ENCODE measurements at regions of chr2 and their contacts with region 1.

Region 1: GRCh38 chr2:17672583-17673317 is 80.9 kb downstream of the SMC6 start:
- DNase-seq: peak; percentile 47
- H3K4me3 Mint-ChIP-seq: no peak overlapping the region
- H3K27ac Mint-ChIP-seq: no peak overlapping the region
- H3K4me1 Mint-ChIP-seq: peaks cover 11% of the 10 kb centered on the region
- H3K27me3 Mint-ChIP-seq: no peaks in the 10 kb centered on the region
- CTCF ChIP-seq: no peak

Region 2: GRCh38 chr2:16767789-16768476 is 904.8 kb before region 1 on chr2:
- CTCF ChIA-PET with region 1: interaction called, 37 read pairs
- POLR2A ChIA-PET with region 1: no interaction called
- intact Hi-C with region 1: loop called (anchors 1 kb)
- DNase-seq: no peak
- H3K4me3 Mint-ChIP-seq: no peak overlapping the region
- H3K27ac Mint-ChIP-seq: no peak overlapping the region
- H3K4me1 Mint-ChIP-seq: peaks cover 9% of the 10 kb centered on the region
- H3K27me3 Mint-ChIP-seq: peaks cover 21% of the 10 kb centered on the region
- CTCF ChIP-seq: no peak

Region 3: GRCh38 chr2:17000184-17000482 is 672.6 kb before region 1 on chr2:
- CTCF ChIA-PET with region 1: no interaction called
- POLR2A ChIA-PET with region 1: no interaction called
- intact Hi-C with region 1: no loop called
- DNase-seq: no peak
- H3K4me3 Mint-ChIP-seq: no peak overlapping the region
- H3K27ac Mint-ChIP-seq: no peak overlapping the region
- H3K4me1 Mint-ChIP-seq: no peaks in the 10 kb centered on the region
- H3K27me3 Mint-ChIP-seq: no peaks in the 10 kb centered on the region
- CTCF ChIP-seq: no peak

Region 4: DNA sequence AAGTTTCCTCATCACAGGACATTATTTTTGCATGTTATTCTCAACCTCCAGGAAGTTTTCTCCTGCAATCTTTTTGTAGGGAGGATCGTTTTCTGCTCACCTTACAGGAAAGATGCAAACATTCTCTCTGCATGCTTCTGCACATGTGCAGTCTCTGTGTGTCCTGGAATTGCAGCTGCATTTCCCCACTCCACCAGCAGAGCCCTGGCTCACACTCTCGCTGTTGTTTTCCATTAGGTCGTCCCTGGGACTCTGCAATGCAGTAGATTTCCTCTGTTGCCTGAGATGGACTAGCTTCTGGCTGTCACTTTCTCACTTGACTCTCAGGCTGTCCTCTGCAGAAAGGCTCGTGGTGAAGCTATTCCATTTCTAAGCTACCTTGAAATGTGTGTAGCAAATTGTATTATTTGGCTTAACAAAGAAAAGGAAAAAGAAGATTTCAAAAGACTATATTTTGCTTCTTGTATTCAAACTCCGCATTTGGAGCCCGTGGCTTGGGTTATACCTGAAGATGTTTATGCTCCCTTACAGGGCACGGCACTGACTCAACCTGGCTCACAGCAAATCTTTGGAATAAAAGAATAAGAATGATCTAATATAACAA is 501.2 kb before region 1 on chr2:
- CTCF ChIA-PET with region 1: no interaction called
- POLR2A ChIA-PET with region 1: no interaction called
- intact Hi-C with region 1: loop called (anchors 10 kb)
- DNase-seq: peak; percentile 63
- H3K4me3 Mint-ChIP-seq: no peak overlapping the region
- H3K27ac Mint-ChIP-seq: no peak overlapping the region
- H3K4me1 Mint-ChIP-seq: no peaks in the 10 kb centered on the region
- H3K27me3 Mint-ChIP-seq: no peaks in the 10 kb centered on the region
- CTCF ChIP-seq: peak; percentile 39

Region 5: DNA sequence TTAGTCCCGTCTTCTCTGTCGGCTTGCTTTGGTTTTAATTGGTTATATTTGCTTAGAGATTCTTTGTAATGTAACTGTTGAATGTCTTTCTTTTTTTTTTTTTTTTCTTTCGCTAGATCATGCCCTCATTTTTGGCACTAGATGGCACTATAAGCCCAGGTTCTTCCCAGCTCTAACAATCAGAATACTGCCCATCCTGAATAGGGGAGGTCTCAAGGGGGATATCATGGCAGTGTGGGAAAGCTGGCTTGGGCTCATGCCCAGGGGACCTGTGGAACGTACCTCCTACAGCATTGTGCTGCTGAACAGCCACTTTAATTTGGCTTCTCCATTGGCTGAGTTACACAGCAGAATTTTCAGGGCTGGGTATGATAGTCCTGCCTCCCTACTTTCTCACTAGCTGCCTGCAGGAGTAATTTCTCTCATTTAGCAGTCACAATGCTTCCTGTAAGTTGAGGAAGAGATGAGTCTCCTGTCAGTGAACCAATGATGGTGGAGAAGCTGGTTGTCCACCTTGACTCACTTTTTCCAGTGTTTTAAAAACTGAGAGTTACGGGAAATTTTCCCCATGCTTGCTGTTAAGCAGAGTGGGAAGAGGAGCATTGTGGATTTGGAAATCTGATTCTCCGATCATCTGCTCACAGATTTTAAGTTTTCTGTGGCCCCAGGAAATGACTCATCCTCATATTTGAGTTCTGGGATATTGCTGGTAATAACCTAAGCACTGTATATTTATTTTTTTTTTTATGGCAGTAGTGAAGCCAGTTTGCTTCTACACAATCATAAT is 201.7 kb before region 1 on chr2:
- CTCF ChIA-PET with region 1: interaction called, 32 read pairs
- POLR2A ChIA-PET with region 1: no interaction called
- intact Hi-C with region 1: loop called (anchors 1 kb)
- DNase-seq: peak; percentile 76
- H3K4me3 Mint-ChIP-seq: no peak overlapping the region
- H3K27ac Mint-ChIP-seq: no peak overlapping the region
- H3K4me1 Mint-ChIP-seq: peaks cover 8% of the 10 kb centered on the region
- H3K27me3 Mint-ChIP-seq: no peaks in the 10 kb centered on the region
- CTCF ChIP-seq: peak; percentile 53

Region 6: DNA sequence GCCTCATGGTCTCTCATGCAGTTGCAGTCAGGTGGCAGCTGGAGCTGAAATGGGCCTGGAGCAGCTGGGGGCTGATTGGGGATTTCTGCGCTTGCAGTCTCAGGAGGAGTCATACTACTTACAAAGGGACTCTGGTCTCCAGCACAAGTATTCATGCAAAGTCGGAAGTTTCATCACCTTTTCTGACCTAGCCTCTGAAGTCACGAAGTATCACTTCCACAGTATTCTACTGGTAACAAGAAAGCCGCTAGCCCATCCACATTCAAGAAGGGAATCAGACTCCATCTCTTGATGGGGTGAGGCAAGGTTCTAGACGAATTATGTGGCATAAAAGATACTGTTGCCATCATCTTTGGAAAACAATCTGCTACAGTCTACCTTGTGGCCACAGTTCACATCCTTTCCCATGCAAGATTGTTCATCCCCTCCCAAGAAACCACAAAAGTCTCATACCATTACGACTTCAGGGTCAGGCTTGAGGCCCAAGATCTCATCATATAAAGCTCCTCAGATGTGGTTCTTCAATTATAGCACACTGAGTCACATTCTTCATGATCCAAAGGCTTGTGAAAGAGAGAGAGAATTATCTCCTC is 14.4 kb before region 1 on chr2:
- CTCF ChIA-PET with region 1: interaction called, 32 read pairs
- POLR2A ChIA-PET with region 1: interaction called, 6 read pairs
- intact Hi-C with region 1: no loop called
- DNase-seq: no peak
- H3K4me3 Mint-ChIP-seq: no peak overlapping the region
- H3K27ac Mint-ChIP-seq: no peak overlapping the region
- H3K4me1 Mint-ChIP-seq: no peaks in the 10 kb centered on the region
- H3K27me3 Mint-ChIP-seq: no peaks in the 10 kb centered on the region
- CTCF ChIP-seq: no peak

Region 7: DNA sequence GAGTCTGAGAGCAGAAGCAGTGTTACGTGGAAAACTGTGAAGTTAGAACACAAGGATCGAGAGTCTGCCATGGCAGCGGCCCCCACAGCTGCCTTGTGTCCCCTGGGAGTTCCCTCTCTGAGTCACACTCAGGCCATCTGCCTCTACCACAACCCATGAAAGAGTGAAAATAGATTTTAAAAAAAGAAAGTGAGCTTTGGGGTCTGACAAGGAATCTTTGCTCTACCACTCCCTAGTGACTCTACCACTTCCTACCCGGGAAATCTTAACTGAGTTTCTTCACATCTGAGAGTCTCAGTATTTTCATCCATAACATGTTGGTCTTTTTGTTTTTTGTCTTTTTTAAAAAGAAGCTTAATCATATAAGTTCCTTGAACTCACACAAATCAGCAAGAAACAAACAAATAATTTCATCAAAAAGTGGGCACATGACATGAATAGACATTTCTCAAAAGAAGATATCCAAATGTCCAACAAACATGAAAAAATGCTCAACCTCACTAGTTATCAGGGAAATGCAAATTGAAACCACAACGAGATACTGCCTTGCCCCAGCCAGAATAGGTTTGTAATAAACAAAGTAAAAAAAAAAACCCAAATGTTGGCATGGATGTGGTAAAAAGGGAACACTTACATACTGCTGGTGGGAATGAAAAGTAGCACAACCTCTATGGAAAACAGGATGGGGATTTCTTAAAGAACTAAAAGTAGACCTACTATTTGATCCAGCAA is 141.2 kb after region 1 on chr2:
- CTCF ChIA-PET with region 1: no interaction called
- POLR2A ChIA-PET with region 1: no interaction called
- intact Hi-C with region 1: no loop called
- DNase-seq: no peak
- H3K4me3 Mint-ChIP-seq: no peak overlapping the region
- H3K27ac Mint-ChIP-seq: peak overlapping the region; percentile 73
- H3K4me1 Mint-ChIP-seq: peaks cover 39% of the 10 kb centered on the region
- H3K27me3 Mint-ChIP-seq: no peaks in the 10 kb centered on the region
- CTCF ChIP-seq: no peak

Measured in MCF 10A (cell line).